Esophagus muscularis mucosa (tissue), 4 donors: ENCODE measurements at regions of chr6 and their contacts with region 1.

Region 1: GRCh38 chr6:29887819-29888776 is 54.2 kb upstream of the HLA-A start:
- DNase-seq: no peak
- H3K4me3 ChIP-seq: peak overlapping the region in 3 of 4 donors; percentile 55 to 66 (median 63)
- H3K27ac ChIP-seq: peak overlapping the region in 3 of 4 donors; percentile 86 to 93 (median 87)
- H3K4me1 ChIP-seq: peaks cover 0 to 15% (median 2%) of the 10 kb centered on the region in 4 donors
- H3K27me3 ChIP-seq: no peaks in the 10 kb centered on the region
- CTCF ChIP-seq: no peak
- EP300 ChIP-seq: no peak
- POLR2A ChIP-seq: no peak

Region 2: DNA sequence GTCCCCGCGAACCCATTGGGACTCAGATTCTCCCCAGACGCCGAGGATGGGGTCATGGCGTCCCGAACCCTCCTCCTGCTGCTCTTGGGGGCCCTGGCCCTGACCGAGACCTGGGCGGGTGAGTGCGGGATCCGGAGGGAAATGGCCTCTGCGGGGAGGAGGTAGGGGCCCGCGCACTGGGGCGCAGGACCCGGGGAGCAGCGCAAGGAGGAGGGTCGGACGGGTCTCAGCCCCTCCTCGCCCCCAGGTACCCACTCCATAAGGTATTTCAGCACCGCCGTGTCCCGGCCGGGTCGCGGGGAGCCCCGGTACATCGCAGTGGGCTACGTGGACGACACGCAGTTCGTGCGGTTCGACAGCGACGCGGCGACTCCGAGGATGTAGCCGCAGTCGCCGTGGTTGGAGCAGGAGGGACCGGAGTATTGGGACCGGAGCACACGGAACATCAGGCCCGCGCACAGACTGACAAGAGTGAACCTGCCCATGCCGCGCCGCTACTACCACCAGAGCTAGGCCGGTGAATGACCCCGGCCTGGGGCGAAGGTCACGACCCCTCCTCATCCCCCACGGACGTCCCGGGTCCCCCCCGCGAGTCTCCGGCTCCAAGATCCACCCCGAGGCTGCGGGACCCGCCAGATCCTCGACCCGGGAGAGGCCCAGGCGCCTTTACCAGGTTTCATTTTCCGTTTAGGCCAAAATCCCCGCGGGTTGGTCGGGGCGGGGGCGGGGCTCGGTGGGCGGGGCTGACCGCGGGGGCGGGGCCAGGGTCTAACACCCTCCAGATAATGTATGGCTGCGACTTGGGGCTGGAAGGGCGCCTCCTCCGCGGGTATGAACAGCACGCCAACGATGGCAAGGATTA is 38.5 kb after region 1 on chr6:
- intact Hi-C with region 1: loop called (anchors 5 kb)
- DNase-seq: peak; percentile 93
- H3K4me3 ChIP-seq: peak overlapping the region in 3 of 4 donors; percentile 50 to 78 (median 64)
- H3K27ac ChIP-seq: peak overlapping the region in 3 of 4 donors; percentile 82 to 87 (median 86)
- H3K4me1 ChIP-seq: peaks cover 0 to 6% (median 0%) of the 10 kb centered on the region in 4 donors
- H3K27me3 ChIP-seq: no peaks in the 10 kb centered on the region
- CTCF ChIP-seq: no peak
- EP300 ChIP-seq: no peak
- POLR2A ChIP-seq: no peak

Region 3: GRCh38 chr6:29942275-29943052 is 54.4 kb after region 1 on chr6 and contains the start of gene HLA-A:
- intact Hi-C with region 1: loop called (anchors 5 kb)
- DNase-seq: peak; percentile 99
- H3K4me3 ChIP-seq: peak within 1 kb of the TSS; percentile 56 to 82 (median 64)
- H3K27ac ChIP-seq: peak within 1 kb of the TSS; percentile 82 to 92 (median 89)
- H3K4me1 ChIP-seq: peaks cover 3 to 30% (median 13%) of the 10 kb centered on the region in 4 donors
- H3K27me3 ChIP-seq: no peaks in the 10 kb centered on the region
- CTCF ChIP-seq: no peak
- EP300 ChIP-seq: no peak
- POLR2A ChIP-seq: peak; percentile 85
- total RNA-seq, gene HLA-A: 243 to 610 (median 499) TPM

Region 4: DNA sequence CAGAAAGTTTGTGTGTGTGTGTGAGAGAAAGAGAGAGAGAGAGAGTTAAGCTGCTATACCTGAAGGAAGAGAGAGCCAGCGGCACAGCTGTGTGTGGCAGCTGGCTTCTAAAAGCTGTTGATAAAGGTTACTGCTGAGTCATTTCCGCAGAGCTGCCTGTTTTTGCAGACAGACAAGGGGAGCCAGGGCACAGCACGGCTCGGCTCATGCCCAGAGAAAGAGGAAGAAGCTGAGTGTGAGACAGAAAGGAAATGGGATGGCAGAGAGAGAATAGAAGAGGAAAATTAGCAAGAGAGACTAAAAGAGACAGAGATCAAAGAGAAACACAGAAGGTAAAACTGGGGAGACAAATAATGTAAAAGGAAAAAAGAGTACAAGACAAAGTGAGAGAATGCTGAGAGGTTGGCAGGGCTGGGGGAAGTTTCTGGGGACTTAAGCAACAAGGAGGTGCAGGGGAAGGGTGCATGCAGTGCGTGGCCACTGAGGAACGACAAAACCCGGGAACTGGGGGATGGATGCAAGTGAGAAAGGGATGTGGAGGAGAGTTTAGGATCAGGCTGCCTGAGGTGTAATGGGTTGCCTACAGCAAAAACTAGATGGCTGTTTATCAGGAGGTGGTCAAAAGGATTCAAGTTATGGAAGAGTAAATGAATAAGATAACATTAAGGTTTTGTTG is 76.9 kb after region 1 on chr6:
- intact Hi-C with region 1: loop called (anchors 5 kb)
- DNase-seq: peak; percentile 95
- H3K4me3 ChIP-seq: peak overlapping the region; percentile 42 to 50 (median 46)
- H3K27ac ChIP-seq: peak overlapping the region; percentile 78 to 88 (median 84)
- H3K4me1 ChIP-seq: peaks cover 36 to 54% (median 46%) of the 10 kb centered on the region in 4 donors
- H3K27me3 ChIP-seq: no peaks in the 10 kb centered on the region
- CTCF ChIP-seq: no peak
- EP300 ChIP-seq: no peak
- POLR2A ChIP-seq: no peak

Region 5: GRCh38 chr6:30171677-30172471 is 283.8 kb after region 1 on chr6:
- intact Hi-C with region 1: no loop called
- DNase-seq: peak; percentile 82
- H3K4me3 ChIP-seq: peak overlapping the region; percentile 4 to 36 (median 13)
- H3K27ac ChIP-seq: no peak overlapping the region
- H3K4me1 ChIP-seq: peaks cover 7 to 11% (median 10%) of the 10 kb centered on the region in 4 donors
- H3K27me3 ChIP-seq: peaks cover 0 to 90% (median 25%) of the 10 kb centered on the region in 4 donors
- CTCF ChIP-seq: no peak
- EP300 ChIP-seq: no peak
- POLR2A ChIP-seq: no peak